ENCODE measurements at regions of chr15 and their contacts with region 1.

Region 1: GRCh38 chr15:83673385-83673784 is 19.5 kb downstream of the ADAMTSL3 start:
- DNase-seq: no peak
- H3K4me3 ChIP-seq: no peak overlapping the region
- H3K27ac ChIP-seq: no peak overlapping the region
- H3K4me1 ChIP-seq: no peaks in the 10 kb centered on the region
- H3K27me3 ChIP-seq: no peaks in the 10 kb centered on the region
- CTCF ChIP-seq: no peak

Region 2: DNA sequence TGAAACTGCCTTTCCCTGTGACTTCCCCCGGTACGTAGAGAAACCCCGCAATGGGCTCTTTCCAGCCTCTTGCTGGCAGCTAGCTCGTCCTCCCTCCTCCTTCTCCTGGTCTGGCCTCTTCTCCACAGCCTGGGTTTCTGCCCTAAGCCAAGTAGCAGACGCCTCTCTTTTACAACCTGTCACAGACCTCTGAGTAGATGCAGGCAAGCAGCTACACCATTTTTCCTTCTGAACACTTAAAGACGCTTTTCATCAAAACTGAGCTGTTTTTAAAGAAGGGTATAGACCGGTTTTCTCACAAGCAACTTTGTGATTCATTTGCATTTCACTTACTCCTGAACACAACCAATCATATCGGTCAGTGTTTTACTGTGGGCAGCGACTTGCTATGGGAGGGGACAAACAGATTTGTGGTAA is 12.5 kb after region 1 on chr15:
- CTCF ChIA-PET with region 1: no interaction called
- POLR2A ChIA-PET with region 1: interaction called, 11 read pairs
- intact Hi-C with region 1: no loop called
- DNase-seq: no peak
- H3K4me3 ChIP-seq: no peak overlapping the region
- H3K27ac ChIP-seq: no peak overlapping the region
- H3K4me1 ChIP-seq: no peaks in the 10 kb centered on the region
- H3K27me3 ChIP-seq: peaks cover 4% of the 10 kb centered on the region
- CTCF ChIP-seq: no peak

Measured in A673 (cell line).